Naive thymus-derived CD4-positive, alpha-beta T cell (primary cell): ENCODE measurements at regions of chr1 and their contacts with region 1.

Region 1: GRCh38 chr1:94962409-94963265 is 35.7 kb upstream of the CNN3 start:
- DNase-seq: peak in 7 of 9 donors; percentile 21 to 41 (median 35)
- ATAC-seq: peak; percentile 73
- H3K4me3 ChIP-seq: peak overlapping the region; percentile 53
- H3K4me3 Mint-ChIP-seq: peak overlapping the region; percentile 82 to 99 (median 90)
- H3K27ac ChIP-seq: peak overlapping the region; percentile 68
- H3K27ac Mint-ChIP-seq: peak overlapping the region; percentile 87 to 99 (median 96)
- H3K4me1 ChIP-seq: peaks cover 0 to 18% of the 10 kb centered on the region in 2 donors
- H3K4me1 Mint-ChIP-seq: peaks cover 0 to 31% (median 15%) of the 10 kb centered on the region in 7 donors
- H3K27me3 ChIP-seq: no peaks in the 10 kb centered on the region
- H3K27me3 Mint-ChIP-seq: no peaks in the 10 kb centered on the region

Region 2: GRCh38 chr1:94325379-94326302 is 637.0 kb before region 1 on chr1:
- CTCF ChIA-PET with region 1: no interaction called
- POLR2A ChIA-PET with region 1: no interaction called
- intact Hi-C with region 1: no loop called
- DNase-seq: no peak
- ATAC-seq: no peak
- H3K4me3 ChIP-seq: no peak overlapping the region
- H3K4me3 Mint-ChIP-seq: no peak overlapping the region
- H3K27ac ChIP-seq: no peak overlapping the region
- H3K27ac Mint-ChIP-seq: no peak overlapping the region
- H3K4me1 ChIP-seq: no peaks in the 10 kb centered on the region
- H3K4me1 Mint-ChIP-seq: peaks cover 3 to 13% (median 5%) of the 10 kb centered on the region in 7 donors
- H3K27me3 ChIP-seq: peaks cover 0 to 3% of the 10 kb centered on the region in 2 donors
- H3K27me3 Mint-ChIP-seq: peaks cover 42 to 59% (median 46%) of the 10 kb centered on the region in 5 donors

Region 3: DNA sequence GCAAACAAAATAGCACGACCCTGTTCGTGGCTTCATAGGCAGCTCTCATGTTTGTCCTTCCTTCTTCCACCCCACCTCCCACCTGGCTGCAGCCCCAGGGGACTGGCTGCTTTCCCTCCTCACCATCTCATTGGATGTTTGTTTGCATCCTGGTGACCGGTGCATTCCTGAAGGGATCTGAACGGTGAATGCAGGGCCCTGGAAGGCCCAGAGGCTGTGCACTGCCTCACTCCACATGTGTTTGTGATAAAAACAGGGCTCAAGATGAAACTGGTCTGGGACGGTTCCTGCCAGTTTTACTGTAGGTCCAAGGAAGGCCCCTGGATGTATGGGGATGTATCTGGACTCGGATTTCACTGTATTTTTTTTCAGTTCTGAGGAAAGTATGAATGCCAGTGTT is 78.5 kb before region 1 on chr1:
- CTCF ChIA-PET with region 1: interaction called, 3 read pairs
- POLR2A ChIA-PET with region 1: no interaction called
- intact Hi-C with region 1: loop called in 1 of 2 experiments (anchors 5 kb)
- DNase-seq: no peak
- ATAC-seq: no peak
- H3K4me3 ChIP-seq: no peak overlapping the region
- H3K4me3 Mint-ChIP-seq: peak overlapping the region in 8 of 10 donors; percentile 0 to 79 (median 68)
- H3K27ac ChIP-seq: no peak overlapping the region
- H3K27ac Mint-ChIP-seq: peak overlapping the region in 8 of 9 donors; percentile 47 to 93 (median 80)
- H3K4me1 ChIP-seq: peaks cover 0 to 6% of the 10 kb centered on the region in 2 donors
- H3K4me1 Mint-ChIP-seq: peaks cover 6 to 16% (median 16%) of the 10 kb centered on the region in 7 donors
- H3K27me3 ChIP-seq: no peaks in the 10 kb centered on the region
- H3K27me3 Mint-ChIP-seq: peaks cover 0 to 1% (median 0%) of the 10 kb centered on the region in 5 donors

Region 4: GRCh38 chr1:94926915-94927404 is 35.7 kb before region 1 on chr1 and contains the start of gene CNN3:
- CTCF ChIA-PET with region 1: no interaction called
- POLR2A ChIA-PET with region 1: no interaction called
- intact Hi-C with region 1: loop called (anchors 1 to 2 kb)
- DNase-seq: peak; percentile 56 to 78 (median 68)
- ATAC-seq: peak; percentile 91
- H3K4me3 ChIP-seq: peak within 1 kb of the TSS; percentile 39
- H3K4me3 Mint-ChIP-seq: peak within 1 kb of the TSS; percentile 88 to 97 (median 94)
- H3K27ac ChIP-seq: peak within 1 kb of the TSS; percentile 63
- H3K27ac Mint-ChIP-seq: peak within 1 kb of the TSS; percentile 37 to 92 (median 84)
- H3K4me1 ChIP-seq: no peaks in the 10 kb centered on the region
- H3K4me1 Mint-ChIP-seq: peaks cover 12 to 38% (median 34%) of the 10 kb centered on the region in 7 donors
- H3K27me3 ChIP-seq: no peaks in the 10 kb centered on the region
- H3K27me3 Mint-ChIP-seq: peaks cover 18 to 57% (median 26%) of the 10 kb centered on the region in 5 donors
- total RNA-seq, gene CNN3: 4.4 to 14.9 (median 7.4) TPM